Right ventricle myocardium inferior (tissue), 1 donor: ENCODE measurements at regions of chr1 and their contacts with region 1.

Region 1: DNA sequence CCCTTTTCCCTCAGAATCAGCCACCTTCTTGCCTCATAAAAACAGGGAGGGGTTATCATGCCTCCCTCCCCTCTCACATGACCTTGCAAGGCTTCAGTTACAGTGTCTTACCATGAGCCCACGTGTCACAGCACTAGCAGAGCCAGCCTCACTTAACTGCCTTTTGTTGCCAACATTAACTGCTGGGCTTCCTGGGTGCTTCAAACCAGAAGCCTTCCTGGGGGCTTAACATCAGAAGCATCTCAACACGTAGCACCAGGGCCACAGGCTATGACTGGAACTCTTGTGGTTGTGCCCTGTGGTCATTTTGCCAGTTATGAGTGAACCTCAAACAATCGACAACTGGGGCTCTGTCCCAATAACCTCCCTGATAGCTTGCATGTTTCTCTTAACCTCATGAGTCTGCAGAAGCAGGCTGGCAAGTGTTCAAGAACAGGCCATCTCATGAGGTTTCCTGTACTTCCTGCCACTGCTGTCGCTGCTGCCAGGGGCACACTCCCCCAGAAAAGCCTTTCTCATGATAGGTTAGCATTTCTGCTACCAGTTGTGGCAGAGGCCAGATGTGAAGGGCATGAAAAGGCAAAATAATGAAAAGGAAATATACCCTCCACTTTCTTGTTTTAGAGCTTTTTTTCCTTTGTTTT is 132.2 kb downstream of the GLUL start:
- DNase-seq: peak; percentile 69
- ATAC-seq: peak; percentile 63

Region 2: GRCh38 chr1:182120411-182121239 is 138.7 kb before region 1 on chr1:
- intact Hi-C with region 1: no loop called
- DNase-seq: no peak
- ATAC-seq: peak; percentile 82

Region 3: DNA sequence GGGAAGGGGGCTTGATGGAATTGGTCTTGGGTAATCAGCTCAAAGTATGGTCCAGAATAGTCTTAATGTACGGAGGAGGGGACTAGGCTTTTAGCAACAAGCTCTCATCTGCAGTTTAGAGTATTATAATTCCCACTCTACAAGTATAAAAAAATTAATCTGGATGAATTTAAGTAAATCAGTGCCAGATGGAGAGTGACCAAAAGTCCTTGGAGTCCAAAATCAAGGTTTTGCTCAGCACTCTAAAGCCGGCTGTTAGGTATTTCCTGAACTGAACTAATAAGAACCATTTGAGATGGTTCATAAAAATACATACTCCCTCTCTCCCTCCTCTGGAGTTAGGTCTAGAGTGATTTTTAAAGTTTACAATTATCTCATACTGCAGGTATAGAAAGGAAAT is 108.6 kb after region 1 on chr1:
- intact Hi-C with region 1: loop called (anchors 10 kb)
- DNase-seq: no peak
- ATAC-seq: peak; percentile 57